ENCODE measurements at regions of chr6 and their contacts with region 1.

Region 1: GRCh38 chr6:161694995-161695394 is 421.1 kb upstream of the AGPAT4 start:
- DNase-seq: peak; percentile 6
- H3K4me3 Mint-ChIP-seq: no peak overlapping the region
- H3K27ac Mint-ChIP-seq: no peak overlapping the region
- H3K4me1 Mint-ChIP-seq: no peaks in the 10 kb centered on the region
- H3K27me3 Mint-ChIP-seq: no peaks in the 10 kb centered on the region

Region 2: GRCh38 chr6:161393839-161394364 is 301.1 kb before region 1 on chr6:
- CTCF ChIA-PET with region 1: interaction called, 4 read pairs
- intact Hi-C with region 1: loop called (anchors 1 kb)
- DNase-seq: peak; percentile 81
- H3K4me3 Mint-ChIP-seq: no peak overlapping the region
- H3K27ac Mint-ChIP-seq: no peak overlapping the region
- H3K4me1 Mint-ChIP-seq: no peaks in the 10 kb centered on the region
- H3K27me3 Mint-ChIP-seq: no peaks in the 10 kb centered on the region

Region 3: DNA sequence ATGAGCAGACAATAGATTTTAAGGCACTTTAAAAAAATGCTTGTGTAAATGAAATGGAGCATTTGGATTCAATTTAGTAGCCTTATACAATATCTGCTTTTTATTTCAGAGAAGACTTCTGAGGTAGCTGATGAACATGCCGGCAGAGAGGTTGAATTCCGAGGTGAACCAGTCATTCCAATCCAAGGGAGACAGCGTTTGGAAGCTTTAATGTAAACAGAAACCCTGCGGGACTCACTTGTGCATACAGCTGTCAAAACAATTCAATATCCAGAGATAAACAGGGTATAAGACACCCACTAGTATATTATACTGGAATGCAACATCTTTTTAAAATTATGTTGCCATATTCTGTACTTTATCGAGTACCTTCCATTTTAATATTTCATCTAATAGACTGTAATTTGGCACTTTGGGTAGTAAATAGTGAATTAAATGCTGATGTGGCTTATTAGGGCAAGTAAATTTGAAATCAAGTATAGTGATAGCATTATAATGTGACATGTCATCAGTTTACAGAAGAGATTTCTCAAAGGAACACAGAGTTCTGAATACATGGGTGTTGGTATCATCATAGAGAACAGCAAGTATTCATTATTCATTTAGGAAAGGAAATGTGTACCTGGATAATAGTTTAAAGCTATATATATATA is 684.9 kb after region 1 on chr6:
- CTCF ChIA-PET with region 1: no interaction called
- intact Hi-C with region 1: no loop called
- DNase-seq: no peak
- H3K4me3 Mint-ChIP-seq: no peak overlapping the region
- H3K27ac Mint-ChIP-seq: no peak overlapping the region
- H3K4me1 Mint-ChIP-seq: no peaks in the 10 kb centered on the region
- H3K27me3 Mint-ChIP-seq: no peaks in the 10 kb centered on the region

Measured in activated naive CD4-positive, alpha-beta T cell treated with anti-CD3 and anti-CD28 coated beads for 36 hours (primary cell).